Activated naive CD4-positive, alpha-beta T cell treated with anti-CD3 and anti-CD28 coated beads for 36 hours (primary cell): ENCODE measurements at regions of chr11 and their contacts with region 1.

Region 1: DNA sequence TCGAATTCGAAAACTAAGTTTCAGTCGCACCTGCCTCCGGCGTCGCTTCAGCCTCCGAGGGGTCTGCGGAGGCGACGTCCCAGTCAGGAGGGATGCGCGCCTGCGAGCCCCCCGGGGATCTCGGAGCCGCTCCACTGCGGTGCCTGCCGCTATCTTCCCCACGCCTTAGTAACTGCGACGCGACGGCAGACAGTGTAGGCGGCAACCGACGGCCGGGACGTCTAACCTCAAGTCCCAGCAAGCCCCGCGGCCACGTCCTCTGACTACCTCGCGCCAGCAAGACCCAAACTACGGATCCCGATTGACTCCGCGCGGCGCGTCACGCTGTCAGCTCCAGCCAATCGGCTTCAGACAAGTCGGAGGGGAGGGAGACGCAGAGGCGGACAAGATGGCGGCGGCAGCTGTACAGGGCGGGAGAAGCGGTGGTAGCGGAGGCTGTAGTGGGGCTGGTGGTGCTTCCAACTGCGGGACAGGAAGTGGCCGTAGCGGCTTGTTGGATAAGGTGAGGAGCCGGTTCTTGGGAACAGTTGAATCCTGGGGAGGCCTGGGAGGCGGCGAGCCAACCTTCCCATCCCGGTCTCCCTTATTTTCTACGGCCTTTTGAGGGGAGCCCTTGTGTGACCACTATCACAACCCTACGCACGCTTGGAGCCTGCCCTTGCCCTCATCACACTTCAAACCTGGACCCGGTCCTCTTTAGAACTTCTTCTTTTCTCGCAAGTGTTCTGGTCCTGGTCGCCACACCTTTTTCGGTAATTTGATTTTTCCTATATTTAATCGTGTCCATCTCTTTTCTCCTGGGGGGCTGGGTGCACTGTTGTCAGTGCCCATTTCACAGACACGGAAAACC is at the starts of genes SPCS2 and XRRA1:
- DNase-seq: peak; percentile 100
- H3K4me3 Mint-ChIP-seq: peak within 1 kb of the TSS; percentile 98
- H3K27ac Mint-ChIP-seq: peak within 1 kb of the TSS; percentile 89
- H3K4me1 Mint-ChIP-seq: peaks cover 36% of the 10 kb centered on the region
- H3K27me3 Mint-ChIP-seq: no peaks in the 10 kb centered on the region
- total RNA-seq, gene SPCS2: 77.6 to 83.3 TPM
- total RNA-seq, gene XRRA1: 5.0 to 9.5 TPM

Region 2: DNA sequence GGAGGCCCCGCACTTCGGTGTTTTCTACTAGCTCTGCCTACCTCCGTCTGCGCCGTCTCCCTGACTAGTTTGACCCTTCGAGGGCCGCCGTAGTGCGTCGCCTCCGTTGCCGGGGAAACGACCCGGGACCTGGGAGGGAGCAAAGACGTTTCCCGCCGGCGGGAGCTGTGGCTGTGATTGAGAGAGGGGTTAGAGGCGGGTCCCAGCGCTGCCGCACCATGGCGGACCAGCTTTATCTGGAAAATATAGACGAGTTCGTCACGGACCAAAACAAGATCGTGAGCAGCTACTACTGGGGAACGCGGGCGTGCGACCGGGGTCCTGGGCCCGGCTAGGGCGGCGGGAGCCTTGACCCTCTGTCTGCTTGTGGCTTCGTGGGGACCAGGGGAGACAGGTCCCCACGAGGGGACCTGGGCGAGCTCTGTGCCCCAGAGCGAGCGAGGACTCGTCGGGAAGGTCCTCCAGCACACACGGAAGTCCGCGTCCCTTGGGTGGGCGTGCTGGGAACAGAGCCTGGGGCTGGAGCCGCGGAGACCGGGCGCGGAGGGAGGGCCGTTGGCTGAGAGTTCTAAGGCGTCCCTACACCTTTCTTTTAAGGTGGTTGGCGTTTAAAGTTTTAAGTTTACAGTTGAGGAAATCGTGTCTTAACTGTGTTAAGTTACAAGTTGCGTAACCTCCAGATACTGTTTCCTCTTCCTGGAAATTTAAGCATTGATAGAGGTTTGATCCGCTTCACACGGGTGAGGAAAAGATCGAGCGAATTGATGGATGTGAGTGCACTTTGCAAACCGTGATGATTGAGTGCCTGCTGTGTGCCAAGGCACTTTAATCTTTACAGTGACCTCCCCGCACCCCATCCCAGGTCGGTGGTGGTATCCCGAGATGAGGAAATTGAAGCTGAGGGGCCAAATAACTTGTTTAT is 356.4 kb before region 1 on chr11 and contains the start of gene POLD3:
- CTCF ChIA-PET with region 1: no interaction called
- intact Hi-C with region 1: loop called (anchors 1 kb)
- DNase-seq: peak; percentile 98
- H3K4me3 Mint-ChIP-seq: peak within 1 kb of the TSS; percentile 89
- H3K27ac Mint-ChIP-seq: peak within 1 kb of the TSS; percentile 98
- H3K4me1 Mint-ChIP-seq: peaks cover 28% of the 10 kb centered on the region
- H3K27me3 Mint-ChIP-seq: no peaks in the 10 kb centered on the region
- total RNA-seq, gene POLD3: 84.8 to 91.9 TPM

Region 3: DNA sequence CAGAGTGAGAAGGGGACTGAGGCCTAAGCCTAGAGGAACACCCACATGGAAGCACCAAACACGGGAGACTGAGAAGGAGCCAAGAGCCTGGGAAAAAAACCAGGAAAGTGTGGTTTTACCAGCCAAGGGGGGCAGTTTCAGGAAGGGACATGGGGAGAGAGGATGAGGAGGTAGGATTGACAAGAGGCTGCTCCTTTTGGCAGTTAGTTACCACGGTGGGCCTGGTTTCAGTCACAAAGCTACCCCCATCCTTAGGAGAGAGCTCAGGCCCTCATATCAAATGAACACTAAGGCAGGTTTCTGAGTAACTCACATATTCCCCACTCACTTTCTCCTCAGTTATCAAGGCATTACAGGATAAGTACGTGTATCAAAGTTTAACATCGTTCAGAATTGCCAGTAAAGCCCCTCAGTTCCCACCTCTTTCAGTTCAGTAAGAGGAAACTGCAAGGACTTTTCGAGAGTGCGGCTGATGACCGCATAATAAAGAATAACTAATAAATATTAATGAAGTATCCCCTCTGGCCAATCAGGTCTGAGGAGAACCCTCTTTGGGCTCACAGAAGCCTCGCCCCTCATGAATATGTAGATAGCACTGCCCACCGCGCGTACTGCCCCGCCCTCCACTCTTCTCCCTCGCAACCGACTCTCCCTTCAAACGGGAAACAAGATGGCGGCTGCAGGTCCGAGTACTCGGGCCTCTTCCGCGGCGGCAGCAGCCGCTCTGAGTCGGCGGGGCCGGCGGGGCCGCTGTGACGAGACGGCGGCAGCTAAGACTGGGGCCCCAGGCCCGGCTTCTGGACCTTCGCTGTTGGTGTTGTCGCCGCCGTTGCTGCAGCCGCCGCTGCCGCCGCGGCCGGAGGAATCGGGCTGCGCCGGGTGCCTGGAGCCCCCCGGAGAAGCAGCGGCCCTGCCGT is 200.7 kb before region 1 on chr11 and contains the start of gene RNF169:
- CTCF ChIA-PET with region 1: no interaction called
- intact Hi-C with region 1: loop called (anchors 2 kb)
- DNase-seq: peak; percentile 94
- H3K4me3 Mint-ChIP-seq: peak within 1 kb of the TSS; percentile 83
- H3K27ac Mint-ChIP-seq: peak within 1 kb of the TSS; percentile 71
- H3K4me1 Mint-ChIP-seq: peaks cover 42% of the 10 kb centered on the region
- H3K27me3 Mint-ChIP-seq: no peaks in the 10 kb centered on the region
- total RNA-seq, gene RNF169: 15.8 to 16.0 TPM

Region 4: DNA sequence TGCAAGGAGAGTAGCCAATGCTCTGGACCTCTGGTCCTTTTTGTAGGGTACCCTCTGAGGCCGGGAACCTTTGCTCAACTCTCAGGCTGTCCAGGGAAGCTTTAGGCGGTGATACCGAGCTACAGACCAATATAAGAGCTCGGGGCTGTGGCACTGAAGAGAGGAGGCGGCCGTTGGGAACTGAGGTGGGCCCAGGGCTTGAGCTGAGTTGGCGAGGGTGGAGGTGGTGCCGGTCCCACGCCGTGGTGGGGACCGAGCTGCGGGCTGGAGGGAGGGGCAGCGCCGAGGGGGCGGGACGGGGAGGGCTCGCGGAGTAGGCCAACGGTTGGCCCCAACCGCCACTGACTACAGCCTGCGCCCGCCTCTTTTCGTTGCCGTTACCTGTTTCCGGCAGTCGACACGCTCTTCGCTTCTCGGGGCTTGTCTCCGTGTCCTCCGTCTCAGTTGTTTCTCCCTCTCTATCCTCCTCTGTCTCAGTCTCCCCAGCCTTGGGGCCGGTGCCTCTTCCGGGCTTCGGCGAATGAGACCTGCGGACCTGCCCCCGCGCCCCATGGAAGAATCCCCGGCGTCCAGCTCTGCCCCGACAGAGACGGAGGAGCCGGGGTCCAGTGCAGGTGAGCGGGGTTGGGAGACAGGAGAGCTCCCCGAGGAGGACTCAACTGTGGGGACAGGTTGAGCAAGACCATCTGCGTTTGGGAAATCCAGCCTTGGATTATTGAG is 39.6 kb after region 1 on chr11 and contains the start of gene NEU3:
- CTCF ChIA-PET with region 1: no interaction called
- intact Hi-C with region 1: loop called (anchors 1 kb)
- DNase-seq: peak; percentile 90
- H3K4me3 Mint-ChIP-seq: peak within 1 kb of the TSS; percentile 95
- H3K27ac Mint-ChIP-seq: peak within 1 kb of the TSS; percentile 79
- H3K4me1 Mint-ChIP-seq: peaks cover 26% of the 10 kb centered on the region
- H3K27me3 Mint-ChIP-seq: no peaks in the 10 kb centered on the region
- total RNA-seq, gene NEU3: 16.4 TPM

Region 5: DNA sequence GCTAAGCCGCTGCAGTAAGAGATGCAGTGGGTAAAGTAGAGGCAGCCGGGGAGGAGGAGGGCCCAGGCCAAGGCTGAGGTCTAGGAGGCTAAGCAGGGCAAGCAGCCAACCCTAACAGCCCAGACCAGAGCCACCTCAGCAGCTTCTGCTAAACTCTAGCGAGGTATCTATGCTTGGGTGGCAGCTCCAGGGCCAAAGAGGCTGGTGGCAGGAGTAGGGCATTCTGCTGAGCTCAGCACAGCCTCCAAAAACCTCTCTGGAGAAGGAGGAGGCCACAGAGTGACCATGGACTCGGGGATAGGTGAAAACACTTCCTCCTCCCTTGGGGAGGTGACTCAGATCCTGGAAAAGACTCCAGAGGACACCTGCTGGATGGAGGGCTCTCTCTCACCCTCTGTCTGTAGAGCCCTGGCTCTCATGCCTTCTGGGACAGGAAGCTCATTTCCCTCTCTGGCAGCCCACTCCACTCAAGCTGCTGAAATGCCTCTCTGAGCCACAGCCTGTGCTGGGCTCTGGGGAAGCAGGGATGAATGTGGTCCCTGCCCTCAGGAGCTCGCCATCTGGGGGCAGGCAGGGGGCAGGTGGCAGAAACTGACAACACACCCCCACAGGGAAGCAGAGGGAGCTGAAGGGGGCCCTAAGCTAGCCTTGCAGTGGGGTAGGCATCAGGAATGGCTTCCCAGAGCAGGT is 275.0 kb after region 1 on chr11:
- CTCF ChIA-PET with region 1: interaction called, 10 read pairs
- intact Hi-C with region 1: no loop called
- DNase-seq: no peak
- H3K4me3 Mint-ChIP-seq: no peak overlapping the region
- H3K27ac Mint-ChIP-seq: no peak overlapping the region
- H3K4me1 Mint-ChIP-seq: no peaks in the 10 kb centered on the region
- H3K27me3 Mint-ChIP-seq: no peaks in the 10 kb centered on the region

Region 6: DNA sequence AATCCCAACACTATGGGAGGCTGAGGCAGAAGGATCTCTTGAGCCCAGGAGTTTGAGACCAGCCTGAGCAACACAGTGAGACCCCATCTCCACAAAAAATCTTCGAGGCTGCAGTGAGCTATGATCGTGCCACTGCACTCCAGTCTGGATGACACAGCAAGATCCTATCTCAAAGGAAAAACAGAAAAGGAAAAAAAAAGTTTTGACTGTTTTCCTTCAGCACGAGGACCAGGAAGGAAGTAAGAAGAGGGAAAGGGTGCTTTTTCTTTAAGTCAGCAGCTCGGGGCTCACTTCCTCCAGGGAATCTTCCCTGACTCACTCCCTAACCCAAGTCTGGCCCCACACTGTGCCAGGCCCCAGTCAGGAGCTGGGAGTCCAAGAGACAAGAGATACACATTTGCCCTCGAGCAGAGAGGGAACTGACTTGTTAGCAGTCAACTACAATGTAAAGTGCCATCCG is 388.1 kb after region 1 on chr11:
- CTCF ChIA-PET with region 1: no interaction called
- intact Hi-C with region 1: loop called (anchors 10 kb)
- DNase-seq: no peak
- H3K4me3 Mint-ChIP-seq: no peak overlapping the region
- H3K27ac Mint-ChIP-seq: peak overlapping the region; percentile 92
- H3K4me1 Mint-ChIP-seq: peaks cover 92% of the 10 kb centered on the region
- H3K27me3 Mint-ChIP-seq: no peaks in the 10 kb centered on the region

Region 7: DNA sequence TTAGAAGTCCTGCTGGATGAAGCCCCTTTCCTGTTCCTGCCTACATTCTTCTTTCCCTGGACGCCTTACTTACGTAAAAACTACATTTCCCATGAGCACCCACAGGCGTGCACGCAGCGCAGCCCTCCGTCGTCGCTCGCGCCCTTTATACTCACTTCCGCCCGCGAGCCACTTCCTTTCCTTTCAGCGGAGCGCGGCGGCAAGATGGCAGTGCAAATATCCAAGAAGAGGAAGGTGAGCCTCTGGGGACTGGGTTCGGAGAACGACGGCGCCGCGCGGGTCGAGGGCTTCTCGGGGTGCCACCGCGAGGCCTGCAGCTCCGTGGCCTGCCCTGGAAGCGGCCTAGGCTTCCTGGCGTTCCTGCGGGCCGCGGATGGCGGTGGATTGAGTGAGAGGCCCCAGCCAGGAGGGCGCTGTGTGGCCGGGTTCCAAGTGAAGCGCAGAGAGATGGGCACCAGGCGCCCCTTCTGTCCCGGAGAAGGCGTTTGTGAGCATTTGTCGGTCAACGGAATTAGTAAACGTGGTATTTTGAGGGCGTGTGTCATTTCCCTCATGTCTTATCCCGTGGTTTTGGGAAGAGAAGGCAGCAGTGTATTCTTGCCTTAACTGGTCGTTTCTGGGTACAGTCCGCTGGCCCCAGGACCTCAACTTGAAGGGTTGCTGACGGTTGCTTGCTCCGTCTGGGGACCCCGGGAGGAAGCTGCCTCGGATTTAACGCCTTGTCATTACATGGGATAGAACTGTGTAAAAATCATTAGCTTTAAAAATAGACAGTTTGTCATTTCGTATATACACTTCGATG is 450.4 kb after region 1 on chr11 and contains the start of gene RPS3:
- CTCF ChIA-PET with region 1: no interaction called
- intact Hi-C with region 1: loop called (anchors 1 kb)
- DNase-seq: peak; percentile 90
- H3K4me3 Mint-ChIP-seq: peak within 1 kb of the TSS; percentile 92
- H3K27ac Mint-ChIP-seq: peak within 1 kb of the TSS; percentile 92
- H3K4me1 Mint-ChIP-seq: peaks cover 44% of the 10 kb centered on the region
- H3K27me3 Mint-ChIP-seq: no peaks in the 10 kb centered on the region
- total RNA-seq, gene RPS3: 5,069 to 5,116 TPM